ENCODE measurements at regions of chr1 and their contacts with region 1.

Region 1: GRCh38 chr1:26472901-26473845 is 933 bp downstream of the HMGN2 start:
- DNase-seq: peak; percentile 95
- ATAC-seq: peak; percentile 69
- H3K4me3 Mint-ChIP-seq: peak overlapping the region; percentile 92
- H3K27ac Mint-ChIP-seq: peak overlapping the region; percentile 57
- H3K4me1 Mint-ChIP-seq: peaks cover 44% of the 10 kb centered on the region
- H3K27me3 Mint-ChIP-seq: no peaks in the 10 kb centered on the region

Region 2: DNA sequence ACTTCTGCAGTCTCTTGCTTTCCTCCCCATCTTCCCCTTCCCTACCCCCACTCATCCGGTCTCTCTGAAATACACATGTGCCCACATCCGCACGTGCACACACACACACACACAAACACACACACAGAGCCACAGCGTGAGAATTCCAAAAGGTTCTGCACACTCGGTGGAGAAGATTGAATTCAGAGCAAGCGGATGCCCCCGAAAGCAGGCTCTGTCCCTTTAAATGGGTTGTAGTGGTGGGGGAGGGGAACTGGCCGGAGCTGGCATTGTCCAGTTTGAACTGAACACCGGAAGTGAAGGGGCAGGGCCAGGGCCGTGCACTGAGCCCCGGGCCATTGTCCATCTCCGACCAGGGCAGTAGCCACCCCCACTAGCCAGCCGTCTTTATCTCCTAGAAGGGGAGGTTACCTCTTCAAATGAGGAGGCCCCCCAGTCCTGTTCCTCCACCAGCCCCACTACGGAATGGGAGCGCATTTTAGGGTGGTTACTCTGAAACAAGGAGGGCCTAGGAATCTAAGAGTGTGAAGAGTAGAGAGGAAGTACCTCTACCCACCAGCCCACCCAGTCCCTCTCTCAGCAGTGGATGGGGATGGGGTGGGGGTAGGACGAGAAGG is 63.9 kb before region 1 on chr1:
- CTCF ChIA-PET with region 1: no interaction called
- POLR2A ChIA-PET with region 1: no interaction called
- DNase-seq: peak; percentile 29
- ATAC-seq: no peak
- H3K4me3 Mint-ChIP-seq: peak overlapping the region; percentile 23
- H3K27ac Mint-ChIP-seq: no peak overlapping the region
- H3K4me1 Mint-ChIP-seq: peaks cover 24% of the 10 kb centered on the region
- H3K27me3 Mint-ChIP-seq: peaks cover 52% of the 10 kb centered on the region

Region 3: GRCh38 chr1:26431979-26432695 is 41.0 kb before region 1 on chr1 and contains the start of gene DHDDS:
- CTCF ChIA-PET with region 1: interaction called, 20 read pairs
- POLR2A ChIA-PET with region 1: interaction called, 16 read pairs
- DNase-seq: peak; percentile 99
- ATAC-seq: peak; percentile 98
- H3K4me3 Mint-ChIP-seq: peak within 1 kb of the TSS; percentile 91
- H3K27ac Mint-ChIP-seq: peak within 1 kb of the TSS; percentile 93
- H3K4me1 Mint-ChIP-seq: peaks cover 26% of the 10 kb centered on the region
- H3K27me3 Mint-ChIP-seq: no peaks in the 10 kb centered on the region
- total RNA-seq, gene DHDDS: 48.3 to 49.5 TPM

Region 4: GRCh38 chr1:26459573-26460031 is 13.6 kb before region 1 on chr1:
- CTCF ChIA-PET with region 1: interaction called, 37 read pairs
- POLR2A ChIA-PET with region 1: interaction called, 4 read pairs
- DNase-seq: no peak
- ATAC-seq: no peak
- H3K4me3 Mint-ChIP-seq: no peak overlapping the region
- H3K27ac Mint-ChIP-seq: no peak overlapping the region
- H3K4me1 Mint-ChIP-seq: no peaks in the 10 kb centered on the region
- H3K27me3 Mint-ChIP-seq: no peaks in the 10 kb centered on the region

Measured in activated CD8-positive, alpha-beta T cell treated with anti-CD3 and anti-CD28 coated beads, Interleukin-2, amount 10 ng/mL, durations not matched to agents 7 days and 5 days (primary cell).